PC-9 (cell line): ENCODE measurements at regions of chr1 and their contacts with region 1.

Region 1: DNA sequence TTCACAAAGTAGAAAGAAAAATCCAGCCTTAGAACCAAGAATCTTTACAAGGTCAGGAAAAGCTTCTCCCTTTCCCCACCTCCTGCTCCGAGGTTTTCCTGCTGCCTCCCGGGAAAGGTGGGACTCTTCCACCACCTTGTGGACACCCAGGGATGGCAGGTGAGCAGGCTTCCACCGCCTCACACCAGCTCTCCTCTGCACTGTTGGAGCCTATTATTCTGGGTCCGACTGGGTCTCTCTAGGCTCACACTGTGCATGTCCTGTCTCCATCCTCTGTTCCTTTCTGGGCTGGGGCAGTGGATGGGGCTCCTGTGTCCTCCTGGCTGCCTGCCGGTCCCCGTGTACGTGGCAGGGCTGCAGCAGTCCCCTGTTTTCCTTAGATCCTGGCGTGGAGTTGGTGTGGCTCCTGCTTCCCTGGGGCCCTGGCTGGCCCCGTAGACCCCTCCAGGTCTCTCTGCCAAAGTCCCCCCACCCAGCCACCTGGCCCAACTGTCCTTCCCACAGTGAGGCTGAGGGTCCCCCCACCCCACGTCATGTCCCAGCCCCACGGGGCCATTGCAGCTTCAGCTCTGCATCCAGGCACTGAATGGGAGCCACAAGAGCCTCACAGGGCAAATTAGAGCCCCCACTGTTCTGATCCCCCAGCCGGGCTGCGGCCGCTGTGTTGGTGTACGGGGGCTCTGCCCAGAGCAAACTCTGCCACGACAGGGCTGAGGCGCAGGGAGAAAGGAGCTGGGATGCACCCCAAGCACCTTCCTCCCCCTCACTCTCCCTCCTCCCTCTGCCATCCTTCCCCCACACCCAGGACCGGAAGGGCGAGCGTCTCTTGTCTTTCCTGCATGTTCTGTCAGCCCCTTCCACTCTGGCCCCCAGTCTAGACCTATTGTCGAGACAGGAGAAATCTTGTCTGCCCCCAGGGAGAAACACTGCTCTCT is 3.3 kb upstream of the SLC45A1 start:
- DNase-seq: peak; percentile 53 to 82
- H3K4me3 ChIP-seq: no peak overlapping the region
- H3K27ac ChIP-seq: peak overlapping the region; percentile 29; the same call in 1 of the 2 replicates
- H3K4me1 ChIP-seq: peaks cover 11% of the 10 kb centered on the region
- H3K27me3 ChIP-seq: no peaks in the 10 kb centered on the region
- CTCF ChIP-seq: peak; percentile 83

Region 2: DNA sequence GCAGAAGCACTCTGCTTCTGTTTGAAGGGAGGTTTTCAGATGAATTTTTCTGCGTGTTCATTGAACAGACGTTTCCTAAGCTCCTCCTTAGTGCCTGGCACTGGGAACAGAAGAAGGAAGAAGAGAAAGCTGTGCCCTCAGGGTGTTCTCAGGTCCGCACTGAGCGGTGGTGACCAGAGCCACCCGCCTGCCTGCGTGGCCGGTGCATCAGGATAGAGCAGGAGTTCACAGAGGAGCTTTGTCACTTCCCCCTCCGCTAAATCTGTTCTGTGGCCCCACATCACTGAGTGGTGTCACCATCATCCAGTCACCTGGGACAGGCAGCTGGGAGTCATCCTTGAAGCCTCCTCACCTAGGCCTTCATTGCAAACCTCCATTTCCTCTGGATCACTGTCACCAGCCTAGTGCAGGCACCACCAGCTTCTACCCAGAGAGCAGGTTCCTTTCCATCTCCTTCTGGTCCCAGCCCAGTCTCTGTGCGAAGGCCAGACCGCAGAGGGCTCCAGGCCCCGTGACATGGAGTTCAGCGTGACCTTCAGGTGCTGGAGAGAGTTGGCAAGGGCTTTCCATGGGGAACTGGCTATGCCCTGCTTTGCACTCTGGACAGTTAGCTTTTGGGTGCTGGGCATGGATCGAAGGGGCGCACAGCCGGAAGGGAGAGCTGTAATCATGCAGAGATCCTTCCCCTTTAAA is 331.4 kb before region 1 on chr1:
- CTCF ChIA-PET with region 1: interaction called, 5 read pairs
- POLR2A ChIA-PET with region 1: no interaction called
- intact Hi-C with region 1: loop called (anchors 1 kb)
- DNase-seq: no peak
- H3K4me3 ChIP-seq: no peak overlapping the region
- H3K27ac ChIP-seq: peak overlapping the region; percentile 46; the same call in 1 of the 2 replicates
- H3K4me1 ChIP-seq: peaks cover 10% of the 10 kb centered on the region
- H3K27me3 ChIP-seq: no peaks in the 10 kb centered on the region
- CTCF ChIP-seq: no peak

Region 3: GRCh38 chr1:8040586-8040985 is 274.0 kb before region 1 on chr1:
- CTCF ChIA-PET with region 1: interaction called, 3 read pairs
- POLR2A ChIA-PET with region 1: interaction called, 14 read pairs
- intact Hi-C with region 1: no loop called
- DNase-seq: peak; percentile 82 to 90
- H3K4me3 ChIP-seq: no peak overlapping the region
- H3K27ac ChIP-seq: peak overlapping the region; percentile 76
- H3K4me1 ChIP-seq: peaks cover 32% of the 10 kb centered on the region
- H3K27me3 ChIP-seq: no peaks in the 10 kb centered on the region
- CTCF ChIP-seq: no peak

Region 4: DNA sequence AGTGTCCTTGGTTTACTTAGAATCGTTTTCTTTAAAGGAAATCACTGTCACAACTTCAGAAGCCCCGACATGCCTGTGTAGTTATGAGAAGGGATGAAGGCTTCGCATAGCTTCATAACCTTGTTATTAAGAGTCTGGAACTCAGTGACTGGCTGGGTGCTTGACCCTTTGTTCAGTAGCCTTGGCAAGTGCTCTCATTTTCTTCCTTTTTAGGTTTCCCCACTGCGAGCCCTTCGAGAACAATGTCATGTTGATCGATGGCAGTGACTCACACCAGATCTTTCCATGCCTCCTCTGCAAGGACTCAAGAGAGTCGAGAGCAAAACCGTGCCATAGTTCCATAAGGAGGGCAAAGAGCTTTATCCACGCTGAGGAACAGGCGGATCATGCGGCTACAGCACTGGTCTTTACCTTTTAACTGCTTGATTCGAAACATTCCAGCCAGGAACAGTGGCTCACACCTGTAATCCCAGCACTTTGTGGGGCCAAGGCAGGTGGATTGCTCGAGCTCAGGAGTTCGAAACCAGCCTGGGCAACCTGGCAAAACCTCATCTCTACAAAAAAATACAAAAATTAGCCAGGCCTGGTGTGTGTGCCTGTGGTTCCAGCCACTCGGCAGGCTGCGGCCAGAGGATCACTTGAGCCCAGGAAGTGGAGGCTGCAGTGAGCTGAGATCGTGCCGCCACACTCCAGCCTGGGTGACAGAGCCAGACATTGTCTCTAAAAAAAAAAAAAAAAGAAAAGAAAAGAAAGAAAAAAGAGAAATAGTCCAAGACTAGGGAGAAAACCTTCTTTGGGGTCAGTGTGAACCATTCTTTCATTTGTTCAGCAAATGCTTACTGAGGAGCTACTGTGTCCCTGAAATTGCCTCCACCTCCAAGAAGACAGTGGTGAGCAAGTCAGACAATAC is 193.1 kb before region 1 on chr1:
- CTCF ChIA-PET with region 1: interaction called, 4 read pairs
- POLR2A ChIA-PET with region 1: no interaction called
- intact Hi-C with region 1: loop called (anchors 1 kb)
- DNase-seq: peak; percentile 63 to 96
- H3K4me3 ChIP-seq: peak overlapping the region; percentile 28; the same call in 1 of the 2 replicates
- H3K27ac ChIP-seq: peak overlapping the region; percentile 100
- H3K4me1 ChIP-seq: peaks cover 78% of the 10 kb centered on the region
- H3K27me3 ChIP-seq: no peaks in the 10 kb centered on the region
- CTCF ChIP-seq: no peak

Region 5: DNA sequence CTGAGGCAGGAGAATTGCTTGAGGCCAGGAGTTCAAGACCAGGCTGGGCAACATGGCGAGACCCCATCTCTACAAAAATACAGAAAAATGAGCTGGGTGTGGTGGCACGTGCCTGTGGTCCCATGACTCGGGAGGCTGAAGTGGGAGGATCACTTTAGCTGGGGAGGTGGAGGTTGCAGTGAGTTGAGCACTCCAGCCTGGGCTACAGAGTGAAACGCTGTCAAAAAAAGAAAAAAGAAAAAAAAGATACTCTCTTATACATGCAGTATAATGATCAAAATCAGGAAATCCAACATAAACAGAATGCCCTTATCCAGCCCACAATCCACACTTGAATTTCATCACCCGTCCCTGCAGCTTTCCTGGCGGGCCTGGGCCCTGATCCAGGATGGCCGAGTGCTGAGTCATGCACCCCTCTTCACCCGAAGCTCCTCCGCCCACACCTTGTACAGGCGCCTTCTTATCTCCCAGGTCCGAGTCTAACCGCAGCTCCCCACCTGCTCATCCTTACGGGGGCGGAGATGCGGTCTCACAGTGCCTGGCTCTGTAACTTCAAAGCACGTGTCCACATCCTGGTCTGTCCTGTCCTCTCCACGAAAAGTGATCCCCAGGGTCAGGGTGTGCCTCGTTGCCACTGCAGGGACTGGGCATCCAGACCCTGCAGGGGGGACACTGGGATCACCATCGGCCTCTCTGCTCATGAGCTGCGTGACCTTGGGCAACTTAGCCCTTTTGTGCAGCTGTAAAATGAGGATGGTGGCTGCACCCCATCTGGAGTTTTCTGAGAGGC is 116.9 kb before region 1 on chr1:
- CTCF ChIA-PET with region 1: interaction called, 8 read pairs
- POLR2A ChIA-PET with region 1: no interaction called
- intact Hi-C with region 1: loop called (anchors 1 kb)
- DNase-seq: peak; percentile 85 to 93
- H3K4me3 ChIP-seq: no peak overlapping the region
- H3K27ac ChIP-seq: peak overlapping the region; percentile 99
- H3K4me1 ChIP-seq: peaks cover 89% of the 10 kb centered on the region
- H3K27me3 ChIP-seq: no peaks in the 10 kb centered on the region
- CTCF ChIP-seq: no peak

Region 6: GRCh38 chr1:8247811-8248436 is 66.7 kb before region 1 on chr1:
- CTCF ChIA-PET with region 1: no interaction called
- POLR2A ChIA-PET with region 1: no interaction called
- intact Hi-C with region 1: no loop called
- DNase-seq: no peak
- H3K4me3 ChIP-seq: no peak overlapping the region
- H3K27ac ChIP-seq: no peak overlapping the region
- H3K4me1 ChIP-seq: no peaks in the 10 kb centered on the region
- H3K27me3 ChIP-seq: no peaks in the 10 kb centered on the region
- CTCF ChIP-seq: no peak

Region 7: GRCh38 chr1:8266436-8267165 is 48.0 kb before region 1 on chr1:
- CTCF ChIA-PET with region 1: interaction called, 15 read pairs
- POLR2A ChIA-PET with region 1: no interaction called
- intact Hi-C with region 1: no loop called
- DNase-seq: no peak
- H3K4me3 ChIP-seq: no peak overlapping the region
- H3K27ac ChIP-seq: no peak overlapping the region
- H3K4me1 ChIP-seq: peaks cover 6% of the 10 kb centered on the region
- H3K27me3 ChIP-seq: no peaks in the 10 kb centered on the region
- CTCF ChIP-seq: no peak

Region 8: DNA sequence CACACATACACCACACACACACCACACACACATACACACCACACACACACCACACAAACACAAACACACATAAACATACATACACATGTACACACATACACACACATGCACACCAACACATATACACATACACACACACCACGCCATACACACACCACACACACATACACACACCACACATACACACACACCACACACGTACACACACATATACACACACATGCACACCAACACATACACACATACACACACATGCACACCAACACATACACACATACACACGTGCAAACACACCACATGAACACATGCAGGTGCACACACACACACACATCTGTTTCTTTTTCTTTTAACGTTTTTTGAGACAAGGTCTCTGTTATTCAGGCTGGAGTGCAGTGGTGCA is 37.7 kb before region 1 on chr1:
- CTCF ChIA-PET with region 1: no interaction called
- POLR2A ChIA-PET with region 1: no interaction called
- intact Hi-C with region 1: no loop called
- DNase-seq: no peak
- H3K4me3 ChIP-seq: no peak overlapping the region
- H3K27ac ChIP-seq: no peak overlapping the region
- H3K4me1 ChIP-seq: no peaks in the 10 kb centered on the region
- H3K27me3 ChIP-seq: no peaks in the 10 kb centered on the region
- CTCF ChIP-seq: no peak

Region 9: GRCh38 chr1:9494929-9495758 is 1180.5 kb after region 1 on chr1:
- CTCF ChIA-PET with region 1: no interaction called
- POLR2A ChIA-PET with region 1: no interaction called
- intact Hi-C with region 1: no loop called
- DNase-seq: peak in 1 of 2 experiments; percentile 55
- H3K4me3 ChIP-seq: no peak overlapping the region
- H3K27ac ChIP-seq: no peak overlapping the region
- H3K4me1 ChIP-seq: no peaks in the 10 kb centered on the region
- H3K27me3 ChIP-seq: no peaks in the 10 kb centered on the region
- CTCF ChIP-seq: peak; percentile 88